ENCODE measurements at regions of chr9 and their contacts with region 1.

Region 1: GRCh38 chr9:133115448-133116345 is 5.3 kb downstream of the RALGDS start:
- DNase-seq: peak; percentile 53
- H3K4me3 Mint-ChIP-seq: no peak overlapping the region
- H3K27ac Mint-ChIP-seq: peak overlapping the region; percentile 69
- H3K4me1 Mint-ChIP-seq: peaks cover 63% of the 10 kb centered on the region
- H3K27me3 Mint-ChIP-seq: no peaks in the 10 kb centered on the region

Region 2: DNA sequence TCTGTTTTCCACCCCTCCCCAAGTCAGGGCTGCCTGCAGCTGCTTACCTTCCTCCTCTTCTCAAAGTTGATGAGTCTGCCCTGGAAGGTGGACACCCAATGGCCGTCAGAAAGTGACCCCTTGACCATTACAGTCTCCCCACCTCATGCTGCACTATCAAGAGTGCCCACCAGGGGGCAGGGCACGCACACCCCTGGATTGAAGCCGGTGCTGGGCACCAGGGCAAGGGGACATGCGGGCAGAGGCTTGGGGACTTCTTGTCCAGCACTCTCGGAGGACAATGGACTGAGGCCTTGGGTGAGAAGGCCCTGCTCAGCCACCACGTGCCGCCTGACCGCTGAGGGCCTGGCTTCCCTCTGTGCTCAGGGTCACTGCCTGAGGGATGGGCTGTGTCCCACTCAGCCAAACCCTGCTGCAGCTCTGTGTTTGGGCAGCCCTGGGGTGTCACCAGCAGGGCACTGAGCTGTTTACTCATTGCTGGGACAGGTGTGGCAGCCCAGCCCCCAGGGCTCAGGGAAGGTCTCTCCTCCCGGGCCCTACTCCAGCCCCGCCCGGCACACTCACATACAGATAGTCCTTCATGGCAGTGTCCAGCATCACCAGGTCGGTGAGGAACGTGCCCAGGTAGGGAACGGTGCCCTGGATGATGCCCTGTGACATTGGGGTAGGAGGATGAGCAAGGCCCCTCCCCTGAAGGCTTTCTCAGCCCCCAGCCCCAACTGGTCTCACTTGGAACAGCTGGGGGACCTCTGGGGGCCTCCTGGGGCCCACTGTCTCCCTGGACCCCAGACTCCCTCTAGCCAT is 12.3 kb before region 1 on chr9:
- CTCF ChIA-PET with region 1: interaction called, 25 read pairs
- POLR2A ChIA-PET with region 1: no interaction called
- DNase-seq: peak; percentile 54
- H3K4me3 Mint-ChIP-seq: no peak overlapping the region
- H3K27ac Mint-ChIP-seq: peak overlapping the region; percentile 51
- H3K4me1 Mint-ChIP-seq: peaks cover 2% of the 10 kb centered on the region
- H3K27me3 Mint-ChIP-seq: no peaks in the 10 kb centered on the region

Region 3: GRCh38 chr9:133133681-133134418 is 18.2 kb after region 1 on chr9:
- CTCF ChIA-PET with region 1: interaction called, 14 read pairs
- POLR2A ChIA-PET with region 1: no interaction called
- DNase-seq: peak; percentile 96
- H3K4me3 Mint-ChIP-seq: peak overlapping the region; percentile 61
- H3K27ac Mint-ChIP-seq: peak overlapping the region; percentile 100
- H3K4me1 Mint-ChIP-seq: peaks cover 82% of the 10 kb centered on the region
- H3K27me3 Mint-ChIP-seq: no peaks in the 10 kb centered on the region